K562 (cell line): ENCODE measurements at regions of chr5 and their contacts with region 1.

Region 1: DNA sequence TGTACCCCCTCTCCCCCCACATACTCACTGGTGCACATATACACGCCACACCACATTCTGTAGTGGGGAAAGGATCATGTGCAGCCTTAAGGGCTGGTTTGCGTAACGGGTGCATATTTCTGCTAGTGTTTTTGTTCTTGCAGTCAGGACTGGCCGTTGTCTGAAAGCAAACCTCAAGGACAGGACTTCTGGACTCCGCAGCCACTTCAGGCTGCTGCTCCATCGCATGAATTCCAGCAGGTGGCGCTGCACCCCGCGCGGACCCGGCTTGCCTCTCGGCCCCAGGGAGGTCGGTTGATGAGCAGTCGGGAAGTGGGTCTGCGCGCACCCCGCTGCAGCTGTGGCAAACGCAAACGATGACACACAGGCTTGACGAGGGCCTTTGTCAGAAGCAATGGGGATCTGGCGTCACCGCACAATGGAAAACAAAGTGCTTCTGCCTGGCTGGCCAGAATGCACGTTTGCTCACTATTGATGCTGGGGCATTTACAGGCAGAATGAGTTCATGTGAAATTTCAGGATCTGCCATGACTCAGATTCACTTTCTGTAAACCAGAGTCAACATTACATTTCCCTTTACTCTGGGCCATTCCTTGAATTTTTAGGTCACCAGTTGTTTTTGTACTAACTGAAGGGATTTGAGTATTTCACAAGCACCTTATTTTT is 36.3 kb upstream of the GLRX start:
- DNase-seq: peak; percentile 88 to 90 (median 89)
- ATAC-seq: peak; percentile 97
- H3K4me3 ChIP-seq: no peak overlapping the region
- H3K27ac ChIP-seq: no peak overlapping the region
- H3K4me1 ChIP-seq: peaks cover 12 to 15% of the 10 kb centered on the region in 2 experiments; a peak in 4 of 5 replicates
- H3K27me3 ChIP-seq: 0 out of 5 replicates have a peak, but pooled peaks cover 0 to 4% of the 10 kb centered on the region in 2 experiments
- CTCF ChIP-seq: peak; percentile 90 to 97 (median 97)
- EP300 ChIP-seq: no peak
- POLR2A ChIP-seq: no peak
- RAD21 ChIP-seq: peak; percentile 97 to 99

Region 2: DNA sequence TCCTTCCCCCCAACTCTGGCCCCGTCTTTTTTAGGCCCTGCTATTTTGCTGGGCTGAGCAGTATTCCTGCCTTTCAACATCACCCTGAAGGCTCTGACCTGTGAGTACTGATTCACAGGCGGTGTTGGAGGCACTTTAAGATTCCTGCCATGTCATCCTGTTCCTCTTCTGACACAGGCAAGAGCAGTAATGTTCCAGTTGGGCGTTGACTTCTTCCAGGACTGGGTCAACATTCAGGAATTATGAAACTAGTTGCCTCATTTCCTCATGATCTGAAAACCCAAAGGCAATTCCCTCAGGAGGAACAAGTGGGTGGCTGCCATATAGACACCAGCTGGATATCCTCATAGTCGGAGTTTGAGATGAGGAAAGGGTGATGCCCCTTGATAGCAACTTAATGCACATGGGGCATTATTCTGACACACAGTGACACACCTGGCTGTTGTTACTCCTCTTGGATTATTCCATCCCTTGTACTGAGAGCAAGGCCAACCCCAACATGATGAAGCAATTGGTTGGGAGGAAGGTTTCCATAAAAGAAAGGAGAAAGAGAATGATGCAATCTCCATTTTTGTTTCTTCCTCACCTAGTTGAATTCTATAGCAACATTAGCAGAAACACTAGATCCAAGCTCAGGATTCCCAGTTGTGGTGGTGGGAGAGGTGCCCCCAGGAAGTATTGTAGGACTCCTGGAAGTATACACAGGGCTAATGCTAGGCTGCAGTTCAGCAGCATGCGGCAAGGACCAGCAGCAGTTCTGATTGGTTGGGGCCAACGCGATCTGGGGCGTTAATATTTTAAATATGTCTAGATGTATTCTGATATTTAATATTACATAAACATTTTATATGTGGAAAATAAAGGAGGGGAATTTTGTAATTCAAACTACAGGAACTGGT is 16.6 kb before region 1 on chr5:
- CTCF ChIA-PET with region 1: no interaction called
- POLR2A ChIA-PET with region 1: no interaction called
- in situ Hi-C with region 1: no loop called
- intact Hi-C with region 1: no loop called
- DNase-seq: no peak
- ATAC-seq: no peak
- H3K4me3 ChIP-seq: no peak overlapping the region
- H3K27ac ChIP-seq: no peak overlapping the region
- H3K4me1 ChIP-seq: peaks cover 0 to 21% of the 10 kb centered on the region in 2 experiments; a peak in 4 of 5 replicates
- H3K27me3 ChIP-seq: no peaks in the 10 kb centered on the region
- CTCF ChIP-seq: no peak
- EP300 ChIP-seq: no peak
- POLR2A ChIP-seq: no peak
- RAD21 ChIP-seq: peak in 1 of 2 experiments; percentile 3; a peak in 1 of 4 replicates

Region 3: GRCh38 chr5:95883613-95884325 is 25.0 kb after region 1 on chr5:
- CTCF ChIA-PET with region 1: no interaction called
- POLR2A ChIA-PET with region 1: interaction called, 3 read pairs
- in situ Hi-C with region 1: no loop called
- intact Hi-C with region 1: loop called (anchors 2 kb)
- DNase-seq: peak; percentile 35 to 42 (median 37)
- ATAC-seq: peak; percentile 73
- H3K4me3 ChIP-seq: no peak overlapping the region
- H3K27ac ChIP-seq: no peak overlapping the region
- H3K4me1 ChIP-seq: peaks cover 0 to 17% of the 10 kb centered on the region in 2 experiments; a peak in 2 of 5 replicates
- H3K27me3 ChIP-seq: 0 out of 5 replicates have a peak, but pooled peaks cover 2 to 7% of the 10 kb centered on the region in 2 experiments
- CTCF ChIP-seq: no peak
- EP300 ChIP-seq: no peak
- POLR2A ChIP-seq: no peak
- RAD21 ChIP-seq: no peak

Region 4: GRCh38 chr5:96595300-96596090 is 736.7 kb after region 1 on chr5:
- CTCF ChIA-PET with region 1: no interaction called
- POLR2A ChIA-PET with region 1: no interaction called
- in situ Hi-C with region 1: loop called (anchors 5 kb)
- intact Hi-C with region 1: loop called (anchors 5 kb)
- DNase-seq: peak; percentile 16 to 48 (median 34)
- ATAC-seq: peak; percentile 72
- H3K4me3 ChIP-seq: no peak overlapping the region
- H3K27ac ChIP-seq: no peak overlapping the region
- H3K4me1 ChIP-seq: no peaks in the 10 kb centered on the region
- H3K27me3 ChIP-seq: peaks cover 5 to 12% of the 10 kb centered on the region in 2 experiments; a peak in 2 of 5 replicates
- CTCF ChIP-seq: peak; percentile 29 to 57 (median 57); a peak in 5 of 6 replicates
- EP300 ChIP-seq: no peak
- POLR2A ChIP-seq: no peak
- RAD21 ChIP-seq: peak in 1 of 2 experiments; percentile 54; a peak in 2 of 4 replicates

Region 5: GRCh38 chr5:96601811-96602244 is 743.0 kb after region 1 on chr5:
- CTCF ChIA-PET with region 1: interaction called, 4 read pairs
- POLR2A ChIA-PET with region 1: no interaction called
- in situ Hi-C with region 1: loop called (anchors 5 kb)
- intact Hi-C with region 1: loop called (anchors 5 kb)
- DNase-seq: peak; percentile 60 to 75 (median 66)
- ATAC-seq: peak; percentile 89
- H3K4me3 ChIP-seq: no peak overlapping the region
- H3K27ac ChIP-seq: no peak overlapping the region
- H3K4me1 ChIP-seq: no peaks in the 10 kb centered on the region
- H3K27me3 ChIP-seq: no peaks in the 10 kb centered on the region; a peak in 1 of 5 replicates
- CTCF ChIP-seq: peak; percentile 66 to 72 (median 69)
- EP300 ChIP-seq: no peak
- POLR2A ChIP-seq: no peak
- RAD21 ChIP-seq: peak; percentile 63 to 81